ENCODE measurements at regions of chr7 and their contacts with region 1.

Region 1: GRCh38 chr7:139332697-139333359 is 8.3 kb upstream of the FMC1 start:
- DNase-seq: no peak
- H3K4me3 ChIP-seq: no peak overlapping the region
- H3K27ac ChIP-seq: no peak overlapping the region
- H3K4me1 ChIP-seq: no peaks in the 10 kb centered on the region
- H3K27me3 ChIP-seq: no peaks in the 10 kb centered on the region
- CTCF ChIP-seq: no peak

Region 2: GRCh38 chr7:139265673-139266072 is 67.2 kb before region 1 on chr7:
- CTCF ChIA-PET with region 1: no interaction called
- dilution Hi-C with region 1: loop called (anchors 5 kb)
- in situ Hi-C with region 1: no loop called
- intact Hi-C with region 1: no loop called
- DNase-seq: no peak
- H3K4me3 ChIP-seq: no peak overlapping the region
- H3K27ac ChIP-seq: no peak overlapping the region
- H3K4me1 ChIP-seq: no peaks in the 10 kb centered on the region
- H3K27me3 ChIP-seq: no peaks in the 10 kb centered on the region
- CTCF ChIP-seq: no peak

Region 3: GRCh38 chr7:139294951-139295575 is 37.8 kb before region 1 on chr7:
- CTCF ChIA-PET with region 1: no interaction called
- dilution Hi-C with region 1: no loop called
- in situ Hi-C with region 1: no loop called
- intact Hi-C with region 1: no loop called
- DNase-seq: no peak
- H3K4me3 ChIP-seq: no peak overlapping the region
- H3K27ac ChIP-seq: no peak overlapping the region
- H3K4me1 ChIP-seq: no peaks in the 10 kb centered on the region
- H3K27me3 ChIP-seq: no peaks in the 10 kb centered on the region
- CTCF ChIP-seq: no peak

Region 4: DNA sequence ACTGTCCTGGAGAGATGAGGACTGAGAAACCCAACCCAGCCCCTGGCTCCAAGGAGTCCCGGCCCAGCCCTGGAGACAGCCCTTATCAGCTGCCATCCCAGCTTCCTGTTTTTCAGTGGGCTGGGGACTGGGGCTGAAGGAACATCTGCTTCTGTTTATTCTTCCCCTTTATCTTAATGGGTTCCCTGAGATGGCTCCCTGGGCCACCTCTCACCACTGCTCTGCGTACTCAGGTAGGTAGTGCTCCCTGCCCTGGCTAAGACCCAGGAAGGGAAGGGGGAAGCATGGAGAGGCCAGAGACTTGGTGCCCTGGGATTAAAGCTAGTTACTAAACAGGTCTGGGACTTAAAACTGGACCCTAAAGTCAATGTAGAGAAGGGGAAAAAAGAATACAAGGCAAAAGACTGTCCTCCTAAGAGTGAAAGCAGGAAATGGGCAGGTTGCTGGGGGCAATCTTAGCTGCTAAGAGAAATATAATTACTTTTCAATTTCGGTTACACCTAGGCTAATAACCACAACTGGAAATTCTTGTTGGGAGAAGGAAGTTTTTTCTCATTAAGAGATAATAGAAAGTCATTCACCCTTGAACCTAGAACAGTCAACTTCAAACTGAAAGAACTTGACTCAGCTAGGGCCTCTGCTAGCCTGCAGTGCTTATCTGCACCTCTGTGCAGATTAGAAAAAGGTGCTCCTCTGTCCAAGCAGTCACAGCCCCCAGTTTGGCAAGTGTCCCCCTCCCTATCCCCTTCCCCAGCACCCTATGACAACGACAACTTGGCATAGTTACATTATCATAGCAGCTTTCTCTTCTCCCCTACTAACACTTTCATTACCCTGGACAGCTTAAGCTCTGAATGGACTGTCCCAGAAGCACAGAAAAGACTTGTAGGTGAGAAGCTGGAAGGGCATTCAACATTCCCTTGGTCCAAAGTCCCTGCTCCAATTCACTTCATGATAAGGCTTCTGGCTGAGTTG is 909.5 kb after region 1 on chr7:
- CTCF ChIA-PET with region 1: no interaction called
- dilution Hi-C with region 1: no loop called
- in situ Hi-C with region 1: no loop called
- intact Hi-C with region 1: no loop called
- DNase-seq: no peak
- H3K4me3 ChIP-seq: no peak overlapping the region
- H3K27ac ChIP-seq: no peak overlapping the region
- H3K4me1 ChIP-seq: no peaks in the 10 kb centered on the region
- H3K27me3 ChIP-seq: peaks cover 1% of the 10 kb centered on the region
- CTCF ChIP-seq: no peak